MCF 10A (cell line): ENCODE measurements at regions of chr5 and their contacts with region 1.

Region 1: DNA sequence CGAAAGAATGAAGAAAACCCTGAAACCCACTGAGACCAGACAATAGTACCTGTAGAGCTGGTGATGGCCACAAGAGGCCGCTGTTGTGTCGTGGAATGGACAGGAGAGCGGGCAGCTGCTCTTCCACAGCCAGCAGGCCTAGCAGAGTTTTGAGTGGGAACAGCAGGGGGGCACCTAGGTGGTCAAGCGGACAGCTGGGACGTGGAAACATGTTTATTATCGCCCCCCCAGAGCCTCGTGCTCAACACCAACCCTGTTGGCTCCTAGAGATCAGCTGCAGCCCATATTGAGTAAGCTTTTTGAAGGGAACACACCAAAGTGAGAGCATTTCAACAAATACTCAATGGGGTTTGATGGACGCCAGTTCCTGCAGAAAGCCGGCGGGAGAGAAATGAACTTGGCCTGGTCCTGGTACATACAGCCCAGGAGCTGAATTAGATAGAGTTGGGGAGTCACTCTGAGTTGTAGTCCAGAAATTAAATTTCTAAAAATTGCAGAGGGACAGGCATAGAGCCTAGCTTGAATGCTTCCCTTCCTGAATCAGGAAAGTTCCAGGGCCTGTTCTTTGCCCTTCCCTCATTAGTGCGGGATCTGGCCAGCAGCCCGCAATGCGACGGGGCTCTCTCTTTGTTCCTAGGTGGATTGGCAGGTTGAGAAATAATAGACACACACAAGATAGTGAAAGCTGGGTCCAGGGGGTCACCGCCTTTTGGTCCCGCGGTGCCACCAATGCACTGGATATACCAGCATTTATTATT is 33.8 kb downstream of the MFAP3 start:
- DNase-seq: peak; percentile 87
- H3K4me3 Mint-ChIP-seq: no peak overlapping the region
- H3K27ac Mint-ChIP-seq: no peak overlapping the region
- H3K4me1 Mint-ChIP-seq: peaks cover 5% of the 10 kb centered on the region
- H3K27me3 Mint-ChIP-seq: no peaks in the 10 kb centered on the region
- CTCF ChIP-seq: peak; percentile 99

Region 2: GRCh38 chr5:153974131-153974812 is 98.3 kb before region 1 on chr5:
- CTCF ChIA-PET with region 1: interaction called, 27 read pairs
- POLR2A ChIA-PET with region 1: no interaction called
- intact Hi-C with region 1: loop called (anchors 1 kb)
- DNase-seq: peak; percentile 68
- H3K4me3 Mint-ChIP-seq: no peak overlapping the region
- H3K27ac Mint-ChIP-seq: no peak overlapping the region
- H3K4me1 Mint-ChIP-seq: no peaks in the 10 kb centered on the region
- H3K27me3 Mint-ChIP-seq: peaks cover 21% of the 10 kb centered on the region
- CTCF ChIP-seq: peak; percentile 94

Region 3: DNA sequence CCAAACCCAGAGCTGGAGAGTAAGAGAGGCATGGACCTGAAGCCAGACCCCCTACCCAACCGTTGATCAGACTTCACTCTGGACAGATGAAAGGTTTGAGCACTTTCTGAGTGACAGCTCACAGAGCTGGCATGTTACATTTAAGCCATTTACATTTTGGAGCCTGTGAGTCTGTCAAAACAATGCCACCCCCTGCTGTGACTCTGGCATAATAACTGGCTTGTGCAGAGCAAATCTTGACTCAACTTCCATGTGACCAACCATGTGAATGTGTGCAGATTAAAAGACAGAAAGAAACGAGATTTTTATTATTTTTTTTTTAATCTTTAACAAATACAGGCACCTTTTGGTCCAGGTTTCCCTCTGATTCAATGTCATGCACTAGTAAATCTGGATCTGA is 14.7 kb after region 1 on chr5:
- CTCF ChIA-PET with region 1: interaction called, 28 read pairs
- POLR2A ChIA-PET with region 1: interaction called, 3 read pairs
- intact Hi-C with region 1: no loop called
- DNase-seq: peak; percentile 90
- H3K4me3 Mint-ChIP-seq: no peak overlapping the region
- H3K27ac Mint-ChIP-seq: no peak overlapping the region
- H3K4me1 Mint-ChIP-seq: peaks cover 13% of the 10 kb centered on the region
- H3K27me3 Mint-ChIP-seq: peaks cover 20% of the 10 kb centered on the region
- CTCF ChIP-seq: no peak

Region 4: DNA sequence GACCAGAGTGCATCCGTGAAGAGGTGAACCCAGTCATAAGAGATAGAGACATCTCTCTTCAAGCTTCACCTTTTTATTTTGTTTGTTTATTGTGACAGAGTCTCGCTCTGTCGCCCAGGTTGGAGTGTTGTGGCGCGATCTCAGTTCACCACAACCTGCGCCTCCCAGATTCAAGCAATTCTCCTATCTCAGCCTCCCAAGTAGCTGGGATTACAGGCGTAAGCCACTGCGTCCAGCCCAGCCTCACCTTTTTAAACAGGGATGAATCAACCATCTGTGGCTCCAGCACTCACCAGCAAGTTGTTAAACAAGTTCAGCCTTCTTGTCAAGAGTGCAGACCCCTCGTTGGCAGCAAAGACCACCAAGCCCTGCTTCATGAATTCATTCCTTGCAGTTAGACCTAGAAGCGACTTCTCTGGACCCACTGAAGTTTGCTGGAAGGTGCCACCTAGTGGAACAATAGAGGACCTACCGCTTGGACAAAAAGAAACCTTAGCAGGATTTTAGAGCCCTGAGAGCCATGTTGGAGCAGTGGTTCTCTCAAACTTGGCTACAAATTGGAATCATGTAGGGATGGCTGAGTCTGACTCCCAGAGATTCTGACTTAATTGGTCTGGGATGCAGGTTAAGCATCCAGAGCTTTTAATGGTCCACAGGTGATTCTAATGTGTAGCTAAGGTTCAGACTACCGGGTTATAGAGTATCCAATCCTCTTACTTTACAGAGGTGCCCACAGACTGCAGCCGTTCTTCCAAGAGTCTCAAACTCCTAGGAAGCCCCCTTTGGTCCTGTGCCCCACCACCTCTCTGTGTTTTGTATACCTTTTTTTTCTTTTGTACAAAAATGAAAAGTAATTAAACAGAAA is 107.5 kb after region 1 on chr5:
- CTCF ChIA-PET with region 1: interaction called, 355 read pairs
- POLR2A ChIA-PET with region 1: interaction called, 9 read pairs
- intact Hi-C with region 1: loop called (anchors 1 kb)
- DNase-seq: peak; percentile 81
- H3K4me3 Mint-ChIP-seq: no peak overlapping the region
- H3K27ac Mint-ChIP-seq: no peak overlapping the region
- H3K4me1 Mint-ChIP-seq: peaks cover 9% of the 10 kb centered on the region
- H3K27me3 Mint-ChIP-seq: peaks cover 41% of the 10 kb centered on the region
- CTCF ChIP-seq: peak; percentile 88

Region 5: GRCh38 chr5:154395407-154396258 is 323.0 kb after region 1 on chr5:
- CTCF ChIA-PET with region 1: interaction called, 10 read pairs
- POLR2A ChIA-PET with region 1: no interaction called
- intact Hi-C with region 1: no loop called
- DNase-seq: peak; percentile 97
- H3K4me3 Mint-ChIP-seq: peak overlapping the region; percentile 37
- H3K27ac Mint-ChIP-seq: peak overlapping the region; percentile 6
- H3K4me1 Mint-ChIP-seq: peaks cover 34% of the 10 kb centered on the region
- H3K27me3 Mint-ChIP-seq: no peaks in the 10 kb centered on the region
- CTCF ChIP-seq: no peak

Region 6: DNA sequence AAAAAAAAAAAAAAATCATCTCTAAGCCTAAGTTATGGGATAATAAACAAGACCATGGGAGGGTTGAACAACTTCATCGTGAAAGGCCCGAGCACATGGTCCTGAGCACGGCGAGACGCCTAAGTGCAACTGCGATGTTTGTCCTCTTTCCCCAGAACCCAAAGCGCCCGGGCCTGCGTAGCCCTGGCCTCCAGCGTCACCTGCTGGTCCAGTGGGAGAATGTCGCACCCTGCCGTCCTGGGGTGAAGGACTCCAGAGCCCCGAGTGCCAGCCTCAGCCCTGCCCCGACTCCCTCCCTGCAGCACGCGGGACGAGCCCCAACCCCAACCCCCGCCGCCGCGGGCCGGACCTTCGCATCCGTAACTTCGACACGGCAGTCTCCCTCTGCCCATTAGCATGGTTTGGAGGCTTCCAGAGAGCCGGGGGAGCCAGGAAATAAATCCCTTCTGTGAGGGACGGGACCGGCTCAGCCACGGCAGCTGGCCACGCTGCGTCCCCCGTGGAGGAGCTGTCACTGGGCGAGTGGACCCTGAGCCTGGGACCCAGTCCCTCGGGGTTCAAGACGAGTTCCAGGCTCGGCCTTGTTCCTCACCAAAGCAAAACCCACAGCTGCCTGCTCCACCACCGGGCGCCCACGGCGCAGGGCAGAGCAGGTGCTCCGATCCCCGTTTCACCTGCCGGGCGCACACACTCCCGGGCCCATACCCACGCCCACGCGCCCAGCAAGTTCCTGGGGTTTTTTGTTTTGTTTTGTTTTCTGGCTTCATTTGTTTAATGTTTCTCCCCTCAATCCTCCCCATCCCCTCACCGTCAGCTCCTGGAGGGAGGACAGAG is 537.9 kb after region 1 on chr5:
- CTCF ChIA-PET with region 1: interaction called, 13 read pairs
- POLR2A ChIA-PET with region 1: no interaction called
- intact Hi-C with region 1: loop called (anchors 1 kb)
- DNase-seq: peak; percentile 90
- H3K4me3 Mint-ChIP-seq: peak overlapping the region; percentile 54
- H3K27ac Mint-ChIP-seq: no peak overlapping the region
- H3K4me1 Mint-ChIP-seq: peaks cover 10% of the 10 kb centered on the region
- H3K27me3 Mint-ChIP-seq: peaks cover 39% of the 10 kb centered on the region
- CTCF ChIP-seq: peak; percentile 100